Activated CD8-positive, alpha-beta memory T cell treated with anti-CD3 and anti-CD28 coated beads, Interleukin-2, amount 10 ng/mL, durations not matched to agents 7 days and 5 days (primary cell): ENCODE measurements at regions of chr15 and their contacts with region 1.

Region 1: DNA sequence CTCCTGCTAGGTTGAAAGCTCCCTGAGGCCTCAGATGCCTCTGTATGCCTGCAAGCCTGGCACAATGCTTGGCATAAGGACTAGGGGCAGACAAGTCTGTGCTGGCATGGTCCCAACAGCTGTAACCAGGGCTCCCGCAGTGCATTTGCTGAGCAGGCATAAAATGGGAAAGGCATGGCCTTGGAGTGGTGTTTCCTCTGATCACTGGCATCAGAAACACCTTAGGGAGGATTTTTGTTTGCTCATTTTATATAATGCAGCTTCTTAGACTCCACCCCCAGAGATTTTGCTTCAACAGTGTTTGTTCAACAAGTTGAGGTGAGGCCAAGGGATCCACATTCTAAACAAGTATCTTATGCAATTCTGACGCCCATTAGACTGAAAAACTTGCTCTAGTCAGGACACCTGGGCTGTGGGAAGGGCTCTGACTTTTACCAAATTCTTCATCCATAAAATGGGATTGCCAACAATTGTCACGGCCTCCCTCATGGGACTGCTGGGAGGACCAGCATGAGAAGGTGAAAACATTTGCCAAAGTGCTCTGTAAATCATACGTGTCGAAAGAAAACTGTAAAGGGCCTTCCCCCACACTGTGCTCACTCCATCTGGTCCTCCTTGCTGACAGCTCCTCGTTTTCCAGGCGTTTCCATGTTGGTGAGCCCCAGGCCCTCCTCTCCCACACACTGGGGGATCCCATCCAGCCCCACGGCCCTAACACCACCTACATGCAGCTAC is 43.1 kb downstream of the STARD5 start:
- DNase-seq: no peak
- ATAC-seq: no peak
- H3K4me3 Mint-ChIP-seq: no peak overlapping the region
- H3K27ac Mint-ChIP-seq: no peak overlapping the region
- H3K4me1 Mint-ChIP-seq: peaks cover 15% of the 10 kb centered on the region
- H3K27me3 Mint-ChIP-seq: no peaks in the 10 kb centered on the region

Region 2: DNA sequence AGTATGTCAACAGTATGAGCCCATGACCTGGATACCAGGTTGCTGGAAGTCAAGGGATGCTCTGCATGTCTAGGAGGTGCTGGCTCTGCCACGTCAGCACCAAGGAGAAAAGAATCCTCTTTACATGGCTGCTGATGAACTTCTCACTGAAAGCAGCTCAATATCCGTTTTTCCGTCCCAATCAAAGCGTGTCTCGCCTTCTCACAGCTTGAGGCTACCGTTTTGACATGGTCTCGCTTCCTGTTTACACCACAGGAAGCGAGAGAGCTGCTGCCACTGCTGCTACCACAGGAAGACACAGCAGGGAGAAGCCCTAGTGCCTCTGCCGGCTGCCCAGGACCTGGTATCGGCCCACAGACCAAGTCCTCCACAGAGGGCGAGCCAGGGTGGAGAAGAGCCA is 15.8 kb after region 1 on chr15:
- CTCF ChIA-PET with region 1: interaction called, 60 read pairs
- DNase-seq: peak; percentile 93
- ATAC-seq: peak; percentile 73
- H3K4me3 Mint-ChIP-seq: peak overlapping the region; percentile 96
- H3K27ac Mint-ChIP-seq: peak overlapping the region; percentile 95
- H3K4me1 Mint-ChIP-seq: peaks cover 84% of the 10 kb centered on the region
- H3K27me3 Mint-ChIP-seq: no peaks in the 10 kb centered on the region